ENCODE measurements at regions of chr13 and their contacts with region 1.

Region 1: DNA sequence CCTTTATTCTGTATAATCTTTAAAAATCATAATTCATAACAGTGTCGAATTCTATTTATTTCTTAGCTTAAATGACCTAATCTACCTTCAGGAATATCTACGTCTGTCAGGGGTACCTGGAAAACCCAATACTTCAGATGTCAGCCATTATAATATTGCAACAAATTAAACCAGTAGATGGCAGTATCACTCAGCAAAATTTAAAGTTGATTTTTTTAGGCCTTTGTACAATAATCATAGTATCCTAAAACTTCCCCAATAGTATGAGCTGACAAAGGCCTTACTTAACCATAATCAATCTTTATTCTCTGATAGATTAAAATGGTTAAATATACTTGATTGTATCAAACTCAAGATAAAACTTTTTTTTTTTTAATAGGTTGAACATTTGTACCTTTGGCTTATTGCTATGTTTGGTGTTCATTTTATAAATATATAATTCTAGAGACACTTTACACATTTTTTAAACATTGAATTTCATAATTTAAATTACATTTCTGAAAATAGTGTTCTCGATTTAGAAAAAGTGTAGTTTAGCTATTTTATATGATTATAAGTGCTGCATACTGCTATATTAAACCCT is 830.2 kb upstream of the SPRY2 start:
- DNase-seq: peak; percentile 3
- H3K4me3 ChIP-seq: no peak overlapping the region
- H3K27ac ChIP-seq: no peak overlapping the region
- H3K4me1 ChIP-seq: no peaks in the 10 kb centered on the region
- H3K27me3 ChIP-seq: no peaks in the 10 kb centered on the region
- CTCF ChIP-seq: peak; percentile 46 to 58

Region 2: GRCh38 chr13:80881942-80882445 is 289.2 kb before region 1 on chr13:
- CTCF ChIA-PET with region 1: no interaction called
- dilution Hi-C with region 1: no loop called
- in situ Hi-C with region 1: no loop called
- intact Hi-C with region 1: no loop called
- DNase-seq: peak; percentile 15
- H3K4me3 ChIP-seq: no peak overlapping the region
- H3K27ac ChIP-seq: no peak overlapping the region
- H3K4me1 ChIP-seq: no peaks in the 10 kb centered on the region
- H3K27me3 ChIP-seq: no peaks in the 10 kb centered on the region
- CTCF ChIP-seq: no peak

Region 3: DNA sequence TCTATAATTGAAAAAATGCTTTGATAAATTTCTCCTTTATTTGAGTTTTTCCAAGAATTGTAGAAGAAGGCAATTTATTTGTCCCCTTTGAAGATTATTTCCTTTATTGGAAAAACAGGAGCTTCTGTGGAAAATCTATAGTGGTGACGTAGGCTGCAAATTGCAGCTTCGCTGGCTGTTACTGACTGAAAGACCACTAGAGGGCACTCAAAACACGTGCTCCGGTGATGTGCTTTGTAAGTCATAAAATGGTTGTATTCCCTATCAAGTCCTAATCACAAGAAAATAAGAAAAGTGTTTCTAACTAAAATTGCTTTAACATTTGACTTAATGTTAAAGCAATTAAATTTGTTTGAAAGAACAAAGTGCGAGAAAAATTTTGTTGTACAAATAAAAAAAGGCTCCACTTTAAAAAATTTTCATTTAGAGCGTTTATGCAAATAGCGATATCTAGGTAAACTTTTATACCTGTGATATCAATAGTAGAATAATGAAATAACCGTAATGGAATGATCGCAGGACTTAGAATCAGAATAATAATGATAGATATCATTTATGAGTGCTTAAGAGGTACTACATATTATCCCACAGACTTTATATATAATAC is 192.0 kb before region 1 on chr13:
- CTCF ChIA-PET with region 1: no interaction called
- dilution Hi-C with region 1: no loop called
- in situ Hi-C with region 1: no loop called
- intact Hi-C with region 1: loop called (anchors 2 kb)
- DNase-seq: peak; percentile 42
- H3K4me3 ChIP-seq: no peak overlapping the region
- H3K27ac ChIP-seq: no peak overlapping the region
- H3K4me1 ChIP-seq: no peaks in the 10 kb centered on the region
- H3K27me3 ChIP-seq: no peaks in the 10 kb centered on the region
- CTCF ChIP-seq: peak; percentile 86 to 91

Region 4: GRCh38 chr13:81058916-81059290 is 112.3 kb before region 1 on chr13:
- CTCF ChIA-PET with region 1: no interaction called
- dilution Hi-C with region 1: no loop called
- in situ Hi-C with region 1: no loop called
- intact Hi-C with region 1: loop called (anchors 2 kb)
- DNase-seq: peak; percentile 66
- H3K4me3 ChIP-seq: no peak overlapping the region
- H3K27ac ChIP-seq: peak overlapping the region; percentile 70
- H3K4me1 ChIP-seq: peaks cover 26% of the 10 kb centered on the region
- H3K27me3 ChIP-seq: no peaks in the 10 kb centered on the region
- CTCF ChIP-seq: no peak

Region 5: DNA sequence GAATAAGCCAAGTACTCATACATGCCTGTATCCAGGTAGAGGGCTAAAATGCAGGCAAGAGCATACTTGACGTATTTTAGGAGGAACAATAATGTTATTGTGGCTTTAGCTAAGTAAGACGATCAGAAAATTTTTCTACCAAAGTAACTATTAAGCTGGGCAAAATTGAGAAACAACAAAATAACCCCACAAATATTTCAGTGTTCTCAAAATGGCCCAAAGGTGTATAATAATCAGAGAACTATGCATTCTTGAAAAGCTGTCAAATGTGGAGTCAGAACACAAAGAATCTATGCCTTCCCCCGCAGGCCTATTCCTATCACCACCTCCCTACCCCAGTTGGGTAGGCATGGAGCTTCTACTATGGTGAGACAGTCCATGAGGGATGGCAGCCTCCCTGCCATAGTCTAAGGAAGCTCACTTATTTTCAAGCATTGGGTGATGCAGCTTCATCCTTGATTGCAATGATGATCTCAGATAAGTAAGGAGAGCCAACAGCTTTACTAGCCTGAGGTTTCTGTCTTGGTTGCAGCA is 302.3 kb after region 1 on chr13:
- CTCF ChIA-PET with region 1: no interaction called
- dilution Hi-C with region 1: no loop called
- in situ Hi-C with region 1: loop called in 1 of 2 experiments (anchors 10 kb)
- intact Hi-C with region 1: no loop called
- DNase-seq: peak; percentile 68
- H3K4me3 ChIP-seq: no peak overlapping the region
- H3K27ac ChIP-seq: peak overlapping the region; percentile 54
- H3K4me1 ChIP-seq: peaks cover 15% of the 10 kb centered on the region
- H3K27me3 ChIP-seq: no peaks in the 10 kb centered on the region
- CTCF ChIP-seq: no peak

Region 6: DNA sequence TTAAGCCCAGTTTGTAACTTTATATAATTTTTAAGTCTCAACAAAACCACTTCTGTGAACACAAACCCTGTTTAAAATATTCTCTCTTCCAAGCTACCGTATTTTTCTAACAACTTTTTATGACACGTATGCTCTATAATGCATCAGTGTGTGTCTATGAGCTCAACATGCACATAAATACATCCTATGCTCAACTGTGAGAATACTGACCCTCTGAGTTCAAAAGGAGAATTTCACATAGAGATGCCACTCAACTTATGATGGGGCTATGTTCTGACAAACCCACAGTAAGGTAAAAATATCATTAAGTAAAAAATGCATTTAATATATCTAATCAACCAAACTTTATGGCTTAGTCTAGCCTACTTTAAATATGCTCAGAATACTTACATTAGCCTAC is 309.5 kb after region 1 on chr13:
- CTCF ChIA-PET with region 1: interaction called, 3 read pairs
- dilution Hi-C with region 1: no loop called
- in situ Hi-C with region 1: loop called in 1 of 2 experiments (anchors 10 kb)
- intact Hi-C with region 1: loop called (anchors 1 kb)
- DNase-seq: peak; percentile 0
- H3K4me3 ChIP-seq: no peak overlapping the region
- H3K27ac ChIP-seq: no peak overlapping the region
- H3K4me1 ChIP-seq: no peaks in the 10 kb centered on the region
- H3K27me3 ChIP-seq: no peaks in the 10 kb centered on the region
- CTCF ChIP-seq: peak; percentile 28 to 56

Region 7: GRCh38 chr13:81610644-81611043 is 439.5 kb after region 1 on chr13:
- CTCF ChIA-PET with region 1: no interaction called
- dilution Hi-C with region 1: no loop called
- in situ Hi-C with region 1: no loop called
- intact Hi-C with region 1: loop called (anchors 10 kb)
- DNase-seq: no peak
- H3K4me3 ChIP-seq: no peak overlapping the region
- H3K27ac ChIP-seq: no peak overlapping the region
- H3K4me1 ChIP-seq: no peaks in the 10 kb centered on the region
- H3K27me3 ChIP-seq: no peaks in the 10 kb centered on the region
- CTCF ChIP-seq: peak in 1 of 2 donors; percentile 13

Region 8: GRCh38 chr13:81872581-81872980 is 701.4 kb after region 1 on chr13:
- CTCF ChIA-PET with region 1: no interaction called
- dilution Hi-C with region 1: no loop called
- in situ Hi-C with region 1: no loop called
- intact Hi-C with region 1: loop called (anchors 5 kb)
- DNase-seq: no peak
- H3K4me3 ChIP-seq: no peak overlapping the region
- H3K27ac ChIP-seq: no peak overlapping the region
- H3K4me1 ChIP-seq: no peaks in the 10 kb centered on the region
- H3K27me3 ChIP-seq: no peaks in the 10 kb centered on the region
- CTCF ChIP-seq: peak in 1 of 2 donors; percentile 22